ENCODE measurements at regions of chr5 and their contacts with region 1.

Region 1: GRCh38 chr5:56588636-56589480 is 226.5 kb upstream of the MAP3K1 start:
- DNase-seq: peak; percentile 65
- H3K4me3 Mint-ChIP-seq: no peak overlapping the region
- H3K27ac Mint-ChIP-seq: no peak overlapping the region
- H3K4me1 Mint-ChIP-seq: peaks cover 40% of the 10 kb centered on the region
- H3K27me3 Mint-ChIP-seq: no peaks in the 10 kb centered on the region

Region 2: GRCh38 chr5:56481428-56482357 is 107.2 kb before region 1 on chr5:
- CTCF ChIA-PET with region 1: no interaction called
- POLR2A ChIA-PET with region 1: no interaction called
- intact Hi-C with region 1: loop called (anchors 5 kb)
- DNase-seq: peak; percentile 32
- H3K4me3 Mint-ChIP-seq: peak overlapping the region; percentile 75
- H3K27ac Mint-ChIP-seq: peak overlapping the region; percentile 75
- H3K4me1 Mint-ChIP-seq: peaks cover 41% of the 10 kb centered on the region
- H3K27me3 Mint-ChIP-seq: no peaks in the 10 kb centered on the region

Region 3: GRCh38 chr5:56565644-56566043 is 23.2 kb before region 1 on chr5:
- CTCF ChIA-PET with region 1: no interaction called
- POLR2A ChIA-PET with region 1: no interaction called
- intact Hi-C with region 1: no loop called
- DNase-seq: no peak
- H3K4me3 Mint-ChIP-seq: no peak overlapping the region
- H3K27ac Mint-ChIP-seq: no peak overlapping the region
- H3K4me1 Mint-ChIP-seq: peaks cover 10% of the 10 kb centered on the region
- H3K27me3 Mint-ChIP-seq: no peaks in the 10 kb centered on the region

Region 4: DNA sequence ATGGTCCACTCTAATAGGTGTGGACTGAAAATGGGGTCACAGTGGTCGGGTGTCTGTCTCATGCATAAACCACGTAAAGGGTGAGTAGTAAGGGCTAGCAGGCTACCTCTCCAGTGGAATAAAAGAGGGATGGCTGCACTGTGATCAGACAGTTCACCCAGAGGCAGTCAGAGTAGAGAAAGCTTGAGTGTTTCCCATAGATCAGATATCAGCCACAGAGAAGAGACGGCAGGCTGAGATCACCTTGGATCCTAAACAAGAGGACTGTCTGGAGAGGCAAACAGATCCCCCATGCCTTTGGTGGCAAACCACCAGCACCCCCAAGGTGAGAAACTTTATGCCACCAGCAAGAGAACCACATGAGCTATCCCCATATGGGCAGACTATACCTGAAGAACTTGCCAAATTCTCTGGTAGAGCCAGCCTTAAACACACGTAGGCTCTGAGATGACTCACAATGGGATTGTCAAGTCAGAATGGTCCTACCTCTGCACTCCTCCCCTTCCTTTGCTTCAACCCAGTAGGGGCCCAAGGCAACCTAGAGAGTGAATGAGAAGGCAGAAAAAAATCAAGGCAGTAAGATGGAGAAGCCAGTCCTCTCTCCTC is 21.3 kb after region 1 on chr5:
- CTCF ChIA-PET with region 1: no interaction called
- POLR2A ChIA-PET with region 1: no interaction called
- intact Hi-C with region 1: loop called (anchors 2 kb)
- DNase-seq: peak; percentile 73
- H3K4me3 Mint-ChIP-seq: peak overlapping the region; percentile 8
- H3K27ac Mint-ChIP-seq: peak overlapping the region; percentile 85
- H3K4me1 Mint-ChIP-seq: peaks cover 69% of the 10 kb centered on the region
- H3K27me3 Mint-ChIP-seq: no peaks in the 10 kb centered on the region